Endothelial cell of umbilical vein (primary cell): ENCODE measurements at regions of chr6 and their contacts with region 1.

Region 1: GRCh38 chr6:56292505-56293181 is 45.3 kb upstream of the COL21A1 start:
- DNase-seq: peak; percentile 88
- H3K4me3 ChIP-seq: no peak overlapping the region
- H3K27ac ChIP-seq: no peak overlapping the region
- H3K4me1 ChIP-seq: peaks cover 5% of the 10 kb centered on the region
- H3K27me3 ChIP-seq: no peaks in the 10 kb centered on the region
- CTCF ChIP-seq: peak; percentile 30 to 38
- POLR2A ChIP-seq: no peak

Region 2: GRCh38 chr6:55445648-55446204 is 846.9 kb before region 1 on chr6:
- CTCF ChIA-PET with region 1: interaction called, 72 read pairs
- POLR2A ChIA-PET with region 1: no interaction called
- dilution Hi-C with region 1: no loop called
- intact Hi-C with region 1: loop called (anchors 1 kb)
- DNase-seq: peak; percentile 60
- H3K4me3 ChIP-seq: no peak overlapping the region
- H3K27ac ChIP-seq: no peak overlapping the region
- H3K4me1 ChIP-seq: no peaks in the 10 kb centered on the region
- H3K27me3 ChIP-seq: peaks cover 0 to 3% of the 10 kb centered on the region in 2 experiments
- CTCF ChIP-seq: peak; percentile 23 to 27
- POLR2A ChIP-seq: no peak

Region 3: DNA sequence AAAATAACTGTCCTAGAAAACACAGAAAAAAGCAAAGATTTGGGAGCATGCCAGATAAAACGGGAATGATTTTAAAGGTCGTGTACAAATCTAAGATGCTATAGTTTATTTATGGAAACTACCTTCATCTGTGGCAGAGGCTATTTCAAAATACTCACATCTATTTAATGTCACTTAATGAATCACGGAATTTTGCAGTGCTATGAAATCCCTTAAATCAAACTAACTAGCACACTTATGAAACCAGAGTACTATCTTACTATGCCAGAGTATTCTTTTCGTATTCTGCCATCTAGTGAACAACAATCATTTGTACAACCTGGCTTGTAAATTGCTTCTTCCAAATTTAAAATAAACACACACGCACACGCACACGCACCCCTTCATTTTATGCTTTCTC is 339.3 kb before region 1 on chr6:
- CTCF ChIA-PET with region 1: interaction called, 12 read pairs
- POLR2A ChIA-PET with region 1: no interaction called
- dilution Hi-C with region 1: no loop called
- intact Hi-C with region 1: no loop called
- DNase-seq: peak; percentile 51
- H3K4me3 ChIP-seq: no peak overlapping the region
- H3K27ac ChIP-seq: no peak overlapping the region
- H3K4me1 ChIP-seq: no peaks in the 10 kb centered on the region
- H3K27me3 ChIP-seq: no peaks in the 10 kb centered on the region
- CTCF ChIP-seq: no peak
- POLR2A ChIP-seq: no peak

Region 4: DNA sequence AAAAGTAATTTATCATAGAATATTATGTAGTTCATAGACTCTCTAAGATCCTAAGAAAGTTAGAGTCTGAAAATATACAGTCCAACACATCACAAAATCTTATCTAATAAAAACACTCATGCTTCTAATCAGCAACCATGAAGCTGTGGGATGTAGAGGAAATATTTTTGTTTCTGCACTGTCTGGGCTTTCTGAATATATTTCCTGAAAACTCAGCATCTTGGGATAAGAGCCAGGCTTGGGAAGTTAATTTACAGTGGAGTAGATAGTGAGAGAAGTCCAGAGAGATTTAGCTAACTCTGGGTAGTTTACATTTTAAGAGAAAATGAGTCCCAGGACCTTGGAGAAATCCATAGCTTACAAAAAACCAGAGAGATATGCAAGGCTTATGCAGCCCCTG is 266.8 kb before region 1 on chr6:
- CTCF ChIA-PET with region 1: interaction called, 13 read pairs
- POLR2A ChIA-PET with region 1: no interaction called
- dilution Hi-C with region 1: no loop called
- intact Hi-C with region 1: no loop called
- DNase-seq: peak; percentile 96
- H3K4me3 ChIP-seq: peak overlapping the region in 1 of 3 experiments; percentile 54
- H3K27ac ChIP-seq: peak overlapping the region; percentile 91
- H3K4me1 ChIP-seq: peaks cover 41% of the 10 kb centered on the region
- H3K27me3 ChIP-seq: no peaks in the 10 kb centered on the region
- CTCF ChIP-seq: no peak
- POLR2A ChIP-seq: peak; percentile 81

Region 5: DNA sequence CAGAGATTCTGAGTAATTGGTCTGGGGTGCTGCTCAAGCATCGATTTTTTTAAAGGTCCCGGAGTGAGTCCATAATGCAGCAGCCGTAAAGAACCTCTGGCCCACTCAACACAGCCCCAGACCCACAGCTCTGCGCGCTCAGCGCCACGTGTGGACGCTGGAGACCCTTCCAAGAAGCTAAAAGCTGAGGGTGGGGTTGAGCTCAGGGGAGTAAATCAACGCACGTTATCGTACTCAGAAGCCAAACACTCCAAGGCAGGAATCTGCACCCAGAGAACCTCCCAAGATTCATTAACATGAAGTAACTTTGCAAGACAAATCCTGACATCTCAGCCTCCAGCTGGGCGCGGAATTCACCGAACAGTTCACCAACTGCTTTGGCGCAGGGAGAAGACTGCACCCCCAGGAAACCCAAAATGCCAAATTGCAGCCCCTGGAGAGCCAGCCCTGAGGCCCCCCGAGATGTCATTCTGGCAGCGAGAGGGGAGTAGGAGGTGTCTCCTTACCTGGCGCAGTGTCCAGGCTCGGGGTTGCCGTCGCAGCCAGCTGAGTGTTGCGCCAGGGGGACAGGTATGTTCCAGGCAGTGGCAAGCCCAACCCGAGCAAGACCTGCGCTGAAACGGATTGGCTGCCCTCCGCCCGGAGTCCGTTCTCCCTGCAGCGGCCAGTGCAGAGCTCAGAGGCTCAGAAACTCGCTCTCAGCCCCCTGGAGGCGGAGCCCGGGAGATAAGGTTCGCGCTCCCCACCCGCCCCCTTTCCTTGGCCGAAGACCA is 45.6 kb before region 1 on chr6 and contains the start of gene COL21A1:
- CTCF ChIA-PET with region 1: interaction called, 11 read pairs
- POLR2A ChIA-PET with region 1: no interaction called
- dilution Hi-C with region 1: no loop called
- intact Hi-C with region 1: loop called (anchors 1 kb)
- DNase-seq: peak; percentile 35
- H3K4me3 ChIP-seq: peak within 1 kb of the TSS in 2 of 3 experiments; percentile 25 to 33
- H3K27ac ChIP-seq: no peak within 1 kb of the TSS
- H3K4me1 ChIP-seq: no peaks in the 10 kb centered on the region
- H3K27me3 ChIP-seq: peaks cover 3% of the 10 kb centered on the region in 2 experiments
- CTCF ChIP-seq: peak; percentile 25 to 64
- POLR2A ChIP-seq: no peak
- total RNA-seq, gene COL21A1: 1.4 TPM in 2 replicates

Region 6: GRCh38 chr6:56388395-56388755 is 95.7 kb after region 1 on chr6:
- CTCF ChIA-PET with region 1: no interaction called
- POLR2A ChIA-PET with region 1: no interaction called
- dilution Hi-C with region 1: no loop called
- intact Hi-C with region 1: no loop called
- DNase-seq: no peak
- H3K4me3 ChIP-seq: no peak overlapping the region
- H3K27ac ChIP-seq: no peak overlapping the region
- H3K4me1 ChIP-seq: no peaks in the 10 kb centered on the region
- H3K27me3 ChIP-seq: no peaks in the 10 kb centered on the region
- CTCF ChIP-seq: no peak
- POLR2A ChIP-seq: no peak

Region 7: GRCh38 chr6:56764081-56764566 is 471.5 kb after region 1 on chr6:
- CTCF ChIA-PET with region 1: no interaction called
- POLR2A ChIA-PET with region 1: no interaction called
- dilution Hi-C with region 1: no loop called
- intact Hi-C with region 1: no loop called
- DNase-seq: peak; percentile 45
- H3K4me3 ChIP-seq: no peak overlapping the region
- H3K27ac ChIP-seq: no peak overlapping the region
- H3K4me1 ChIP-seq: no peaks in the 10 kb centered on the region
- H3K27me3 ChIP-seq: no peaks in the 10 kb centered on the region
- CTCF ChIP-seq: peak; percentile 31 to 53
- POLR2A ChIP-seq: no peak

Region 8: GRCh38 chr6:56902641-56903464 is 610.2 kb after region 1 on chr6:
- CTCF ChIA-PET with region 1: no interaction called
- POLR2A ChIA-PET with region 1: no interaction called
- dilution Hi-C with region 1: no loop called
- intact Hi-C with region 1: no loop called
- DNase-seq: peak; percentile 49
- H3K4me3 ChIP-seq: no peak overlapping the region
- H3K27ac ChIP-seq: no peak overlapping the region
- H3K4me1 ChIP-seq: peaks cover 10% of the 10 kb centered on the region
- H3K27me3 ChIP-seq: no peaks in the 10 kb centered on the region
- CTCF ChIP-seq: peak; percentile 50 to 52
- POLR2A ChIP-seq: no peak